Posterior cingulate gyrus (tissue), 11 donors: ENCODE measurements at regions of chr9 and their contacts with region 1.

Region 1: GRCh38 chr9:16344343-16344742 is 526.1 kb downstream of the BNC2 start:
- DNase-seq: no peak

Region 2: GRCh38 chr9:16289639-16290038 is 54.7 kb before region 1 on chr9:
- intact Hi-C with region 1: loop called (anchors 10 kb)
- DNase-seq: no peak

Region 3: DNA sequence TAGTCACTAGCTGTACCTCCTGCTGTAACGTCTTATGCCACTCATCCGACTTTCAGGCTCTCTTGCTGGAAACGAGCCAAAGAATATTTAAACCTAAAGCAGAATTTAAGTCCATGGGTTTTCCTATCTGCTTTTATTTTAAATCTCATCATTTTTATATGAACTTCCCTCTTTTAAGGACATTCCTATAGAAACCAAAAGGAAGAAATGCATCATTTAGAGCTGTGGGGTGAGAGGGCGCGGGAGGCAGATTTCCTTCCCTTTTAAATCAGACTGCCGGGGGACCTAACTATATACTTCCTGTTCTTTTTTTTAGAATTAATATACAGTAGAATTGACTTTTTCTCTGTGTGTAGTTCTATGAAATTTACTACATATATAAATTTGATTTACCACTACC is 57.4 kb after region 1 on chr9:
- intact Hi-C with region 1: loop called (anchors 10 kb)
- DNase-seq: no peak

Region 4: DNA sequence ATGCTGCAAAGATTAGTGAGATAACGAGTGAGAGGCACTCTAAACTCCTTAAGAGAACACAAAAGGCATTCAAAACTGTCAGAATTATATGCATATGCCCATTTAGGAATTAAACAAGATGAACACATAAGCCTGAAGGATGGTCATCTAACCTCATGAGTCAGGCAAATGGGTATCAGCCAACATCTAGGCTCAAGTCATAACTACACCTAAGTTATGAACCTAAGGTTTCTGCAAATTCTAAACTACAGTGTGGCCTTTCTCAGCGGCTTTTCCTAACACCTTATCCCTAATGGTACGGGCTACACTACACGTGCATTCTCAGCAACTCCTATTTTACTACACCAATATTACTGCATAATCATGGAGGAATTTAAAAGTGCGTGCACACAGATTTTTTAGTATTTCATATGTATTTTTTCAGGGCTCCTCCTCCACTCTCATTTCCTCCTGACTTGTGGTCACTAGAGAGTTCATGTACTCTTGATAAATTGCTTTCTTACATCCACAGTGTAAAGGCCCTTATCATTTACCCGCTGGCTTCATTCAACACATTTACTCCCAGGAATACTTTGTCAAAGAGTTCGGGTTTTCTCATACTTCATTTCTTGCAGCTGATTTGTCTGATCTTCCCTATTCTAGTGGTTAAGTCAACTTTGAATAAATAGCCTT is 209.7 kb after region 1 on chr9:
- intact Hi-C with region 1: no loop called
- DNase-seq: no peak